ENCODE measurements at regions of chr19 and their contacts with region 1.

Region 1: DNA sequence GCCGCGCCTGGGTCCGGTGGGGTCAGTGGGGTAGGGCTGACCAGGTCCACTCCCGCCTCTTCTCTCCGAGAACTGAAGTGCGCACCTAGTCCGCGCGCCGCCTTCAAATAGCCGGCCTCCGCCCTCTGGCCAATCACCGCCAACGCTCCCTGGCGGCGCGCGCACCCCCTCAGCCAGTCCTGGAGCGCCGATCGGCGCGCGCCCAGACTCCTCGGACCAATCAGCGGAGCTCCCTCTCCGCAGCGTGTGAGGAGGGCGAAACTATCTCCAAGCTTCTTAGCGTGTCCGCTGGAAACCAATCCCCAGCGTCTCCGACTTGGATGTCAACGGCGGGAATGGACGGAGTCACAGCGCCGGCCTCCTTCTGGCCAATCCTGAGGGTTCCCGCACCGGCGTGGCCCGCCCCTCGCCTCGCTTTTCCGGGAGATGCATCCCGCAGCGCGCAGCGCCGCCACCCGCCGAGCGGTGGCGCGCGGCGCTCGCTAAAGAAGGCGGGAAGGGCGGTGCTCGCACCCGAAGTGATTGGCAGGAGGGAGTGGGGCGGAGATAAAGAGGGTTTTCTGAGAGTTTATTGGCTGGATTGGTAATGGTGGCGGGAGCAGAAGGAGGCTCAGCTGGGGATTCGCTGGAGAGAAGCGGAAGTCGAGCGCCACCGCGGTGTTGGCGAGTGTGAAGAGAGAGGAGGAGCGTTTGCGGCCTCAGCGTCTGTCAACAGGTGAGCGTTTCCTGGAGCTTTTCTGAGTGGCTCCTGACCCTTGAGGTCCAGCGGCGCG is at the start of gene ASF1B:
- DNase-seq: peak; percentile 94 to 99 (median 98)
- ATAC-seq: peak; percentile 82 to 84
- H3K4me3 Mint-ChIP-seq: peak within 1 kb of the TSS; percentile 77 to 96 (median 91)
- H3K27ac Mint-ChIP-seq: peak within 1 kb of the TSS; percentile 86 to 98 (median 94)
- H3K4me1 Mint-ChIP-seq: peaks cover 10 to 35% (median 31%) of the 10 kb centered on the region in 4 donors
- H3K27me3 Mint-ChIP-seq: no peaks in the 10 kb centered on the region
- polyA plus RNA-seq, gene ASF1B: 2.3 to 4.2 (median 3.7) TPM

Region 2: GRCh38 chr19:14091081-14091812 is 45.4 kb before region 1 on chr19:
- POLR2A ChIA-PET with region 1: interaction called, 21 read pairs
- DNase-seq: peak in 8 of 10 donors; percentile 40 to 89 (median 82)
- ATAC-seq: peak; percentile 54 to 70
- H3K4me3 Mint-ChIP-seq: peak overlapping the region; percentile 91 to 100 (median 100)
- H3K27ac Mint-ChIP-seq: peak overlapping the region; percentile 89 to 100 (median 99)
- H3K4me1 Mint-ChIP-seq: peaks cover 17 to 30% (median 20%) of the 10 kb centered on the region in 4 donors
- H3K27me3 Mint-ChIP-seq: peaks cover 0 to 2% (median 0%) of the 10 kb centered on the region in 5 donors

Region 3: GRCh38 chr19:14147797-14148605 is 11.3 kb after region 1 on chr19:
- POLR2A ChIA-PET with region 1: interaction called, 45 read pairs
- DNase-seq: peak; percentile 27 to 72 (median 52)
- ATAC-seq: peak; percentile 51 to 54
- H3K4me3 Mint-ChIP-seq: peak overlapping the region; percentile 50 to 94 (median 68)
- H3K27ac Mint-ChIP-seq: peak overlapping the region; percentile 93 to 100 (median 98)
- H3K4me1 Mint-ChIP-seq: peaks cover 20 to 38% (median 36%) of the 10 kb centered on the region in 4 donors
- H3K27me3 Mint-ChIP-seq: no peaks in the 10 kb centered on the region

Region 4: DNA sequence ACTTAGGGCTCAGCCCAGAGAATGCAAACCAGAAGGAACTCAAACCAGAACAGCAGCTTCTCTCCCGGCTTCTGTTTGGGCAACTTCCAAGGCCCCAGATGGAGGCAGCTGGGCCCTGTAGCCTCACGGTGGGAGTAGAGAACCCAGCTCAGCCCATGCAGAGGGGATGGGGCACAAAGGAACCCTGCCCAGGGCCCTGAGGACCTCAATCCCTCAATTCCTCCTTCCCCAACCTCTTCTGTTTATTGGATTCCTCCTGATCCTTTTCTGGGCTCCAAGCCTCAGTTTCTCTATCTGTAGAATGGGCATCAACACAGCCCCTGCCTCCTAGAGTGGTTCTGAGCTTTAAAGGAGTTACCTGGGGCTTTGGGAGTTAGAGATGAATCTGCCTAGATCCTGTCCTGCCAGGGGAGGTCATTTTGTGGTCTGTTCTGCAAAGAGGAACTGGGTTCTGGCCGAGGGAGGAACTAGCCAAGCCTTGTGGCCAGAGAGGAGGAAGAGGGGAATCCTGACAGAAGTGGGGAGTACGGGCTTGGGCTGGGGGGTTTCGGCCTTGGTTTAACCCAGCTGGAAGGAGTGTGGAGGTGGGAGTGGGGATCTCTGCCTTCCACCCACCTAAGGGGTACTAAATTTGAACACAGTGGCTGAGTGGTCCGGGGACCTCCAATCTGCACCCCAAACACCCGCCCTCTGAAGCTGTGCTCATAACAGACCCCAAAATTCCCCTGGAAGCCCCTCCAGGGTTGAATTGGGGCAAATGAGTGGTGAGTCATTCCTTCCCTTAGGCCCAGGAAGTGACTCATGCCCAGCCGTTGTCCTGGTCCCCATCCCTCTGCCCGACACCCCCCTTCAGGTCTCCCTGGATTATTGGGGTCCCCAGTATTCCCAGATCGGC is 247.2 kb after region 1 on chr19:
- POLR2A ChIA-PET with region 1: interaction called, 18 read pairs
- DNase-seq: peak in 4 of 10 donors; percentile 50 to 80 (median 76)
- ATAC-seq: peak in 1 of 2 donors; percentile 11
- H3K4me3 Mint-ChIP-seq: peak overlapping the region; percentile 84 to 99 (median 94)
- H3K27ac Mint-ChIP-seq: peak overlapping the region; percentile 94 to 100 (median 98)
- H3K4me1 Mint-ChIP-seq: peaks cover 30 to 63% (median 50%) of the 10 kb centered on the region in 4 donors
- H3K27me3 Mint-ChIP-seq: no peaks in the 10 kb centered on the region

Region 5: GRCh38 chr19:14472202-14472938 is 335.7 kb after region 1 on chr19:
- POLR2A ChIA-PET with region 1: interaction called, 13 read pairs
- DNase-seq: peak; percentile 66 to 93 (median 87)
- ATAC-seq: peak; percentile 82
- H3K4me3 Mint-ChIP-seq: peak overlapping the region; percentile 44 to 80 (median 70)
- H3K27ac Mint-ChIP-seq: peak overlapping the region in 2 of 10 donors; percentile 53 to 56
- H3K4me1 Mint-ChIP-seq: peaks cover 18 to 48% (median 32%) of the 10 kb centered on the region in 4 donors
- H3K27me3 Mint-ChIP-seq: peaks cover 11 to 25% (median 14%) of the 10 kb centered on the region in 5 donors